GM10248 (cell line): ENCODE measurements at regions of chr16 and their contacts with region 1.

Region 1: DNA sequence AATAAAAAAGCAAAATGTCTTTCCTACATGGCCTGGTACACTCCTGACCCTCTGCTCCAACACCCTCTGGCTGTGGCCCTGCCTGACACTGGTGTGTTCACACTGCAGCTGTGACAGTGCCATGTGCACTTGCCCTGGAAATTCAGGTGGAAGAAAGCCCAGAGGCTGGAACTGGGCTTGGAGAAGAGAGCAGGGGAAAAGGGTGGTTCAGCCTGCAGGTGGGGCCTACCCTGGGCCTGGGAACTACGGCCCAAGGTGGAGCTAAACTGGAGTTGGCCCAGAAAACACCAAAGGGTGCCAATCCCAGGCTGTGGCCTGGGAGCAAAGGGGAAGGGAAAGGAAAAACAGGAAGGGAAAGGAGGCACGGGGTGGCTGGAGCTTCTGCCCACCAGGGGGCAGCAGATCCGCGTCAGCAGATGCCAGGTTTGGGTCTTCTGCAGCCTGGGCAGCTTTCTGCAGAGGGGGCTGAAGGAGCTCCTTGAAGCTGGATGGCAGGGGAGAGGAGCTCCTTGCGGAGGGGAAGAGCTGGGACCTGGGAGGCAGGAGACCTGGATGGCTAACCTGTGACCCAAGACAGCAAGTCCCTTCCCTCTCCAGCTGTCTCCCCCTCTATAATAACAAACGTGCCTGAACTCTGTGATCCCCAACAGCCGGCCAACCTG is 15.4 kb upstream of the CTCF start:
- DNase-seq: peak; percentile 80
- CTCF ChIP-seq: peak; percentile 96

Region 2: GRCh38 chr16:67499106-67499505 is 47.8 kb before region 1 on chr16:
- CTCF ChIA-PET with region 1: interaction called, 12 read pairs
- POLR2A ChIA-PET with region 1: no interaction called
- DNase-seq: no peak
- CTCF ChIP-seq: no peak

Region 3: DNA sequence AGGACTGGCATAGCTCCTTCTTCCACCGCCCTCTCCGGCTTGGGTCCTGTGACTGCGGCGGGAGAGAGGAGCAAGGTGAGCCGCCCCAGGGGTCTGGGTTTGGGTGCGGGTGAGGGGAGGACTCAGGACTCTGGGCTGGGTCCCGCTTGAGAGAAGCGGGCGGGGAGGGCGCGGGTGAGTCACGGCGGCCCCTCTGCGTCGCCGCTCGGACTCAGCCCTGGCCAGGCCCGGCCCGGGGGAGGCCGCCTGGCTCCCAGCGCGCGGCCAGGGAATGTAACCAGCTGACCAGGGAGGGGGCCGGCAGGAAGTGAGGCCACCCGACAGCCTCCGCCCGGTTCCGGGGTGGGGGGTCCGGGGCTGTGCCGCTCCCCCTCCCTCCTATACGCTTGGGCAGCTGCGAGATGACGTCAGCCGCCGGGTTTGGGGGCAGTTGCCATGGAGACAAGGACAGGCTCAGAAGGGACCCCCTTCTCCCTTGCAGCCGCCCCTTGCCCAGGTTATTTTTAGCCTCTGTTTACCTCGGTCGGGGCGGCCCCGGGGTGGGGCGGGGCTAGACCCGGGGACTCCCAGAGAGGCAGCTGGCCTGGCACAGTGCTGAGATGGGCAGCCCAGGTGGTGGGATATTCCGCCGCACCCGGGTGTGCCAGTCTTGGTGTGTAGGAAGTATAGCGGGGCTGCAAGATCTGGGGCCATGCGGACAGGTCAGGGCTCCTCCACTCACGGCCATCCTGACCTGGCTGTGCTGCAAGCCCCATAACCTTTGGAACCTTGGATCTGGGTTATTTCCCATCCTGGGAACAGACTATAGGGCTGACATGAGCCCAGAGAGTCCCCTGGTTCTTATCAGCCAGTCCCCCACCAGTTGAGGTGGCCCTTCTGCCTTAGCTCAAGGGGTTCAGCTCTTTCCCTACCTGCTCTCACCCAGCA is 16.6 kb before region 1 on chr16:
- CTCF ChIA-PET with region 1: interaction called, 65 read pairs
- POLR2A ChIA-PET with region 1: no interaction called
- DNase-seq: peak; percentile 67
- CTCF ChIP-seq: no peak

Region 4: DNA sequence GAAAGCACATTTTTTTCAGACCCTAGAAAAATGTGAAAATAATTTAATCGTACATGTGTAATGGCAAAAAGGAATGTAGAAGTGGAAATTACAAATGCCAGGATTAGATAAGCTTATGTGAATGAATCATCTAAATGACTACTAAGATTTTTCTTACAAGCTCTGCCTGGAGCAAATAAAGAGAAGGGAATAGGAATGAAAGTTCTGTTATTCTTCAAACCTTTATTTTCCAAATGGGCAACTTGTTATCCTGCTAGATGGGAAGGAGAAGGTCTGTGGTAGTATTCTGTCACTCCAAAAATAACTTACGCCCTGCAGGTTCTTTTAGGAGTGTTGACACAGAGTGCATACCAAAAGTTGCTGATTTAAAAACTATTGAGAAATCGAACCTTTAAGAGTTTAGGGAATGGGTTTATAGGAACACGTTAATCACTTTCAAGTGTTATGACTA is 25.1 kb after region 1 on chr16:
- CTCF ChIA-PET with region 1: interaction called, 13 read pairs
- POLR2A ChIA-PET with region 1: no interaction called
- DNase-seq: no peak
- CTCF ChIP-seq: no peak

Region 5: GRCh38 chr16:67632415-67633172 is 85.7 kb after region 1 on chr16:
- CTCF ChIA-PET with region 1: interaction called, 14 read pairs
- POLR2A ChIA-PET with region 1: no interaction called
- DNase-seq: no peak
- CTCF ChIP-seq: no peak

Region 6: DNA sequence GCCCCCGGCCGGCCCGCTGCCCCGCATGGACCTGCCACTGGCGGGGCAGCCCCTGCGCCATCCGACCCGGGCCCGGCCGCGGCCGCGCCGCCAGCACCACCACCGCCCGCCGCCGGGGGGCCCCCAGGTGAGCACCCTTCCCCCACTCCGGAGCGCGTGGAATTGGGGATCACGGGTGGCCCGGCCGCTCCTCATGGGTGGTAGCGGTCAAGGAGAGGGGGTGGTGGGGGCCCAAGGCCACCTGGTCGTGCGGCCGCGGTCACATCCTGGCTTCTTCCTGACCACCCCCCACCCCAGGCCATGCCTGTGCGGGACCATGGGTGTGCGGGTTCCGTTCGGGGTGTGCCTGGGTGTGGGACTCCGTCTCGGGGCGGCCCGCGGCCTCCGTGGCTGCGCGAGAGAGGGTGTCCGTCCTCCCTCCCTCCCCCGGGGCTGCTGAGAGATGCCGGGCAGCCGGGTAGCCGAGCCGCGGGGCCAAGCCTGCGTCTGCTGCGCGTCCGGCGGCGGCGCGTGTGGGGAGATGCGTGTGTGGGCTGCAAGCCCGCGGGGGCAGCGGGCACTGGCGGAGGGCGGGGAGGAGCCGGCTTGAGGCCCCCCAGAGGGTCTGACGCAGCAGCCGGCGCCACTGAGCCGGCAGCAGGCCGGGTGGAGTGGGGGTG is 106.4 kb after region 1 on chr16:
- CTCF ChIA-PET with region 1: interaction called, 157 read pairs
- POLR2A ChIA-PET with region 1: no interaction called
- DNase-seq: no peak
- CTCF ChIP-seq: no peak

Region 7: GRCh38 chr16:67667817-67668494 is 121.1 kb after region 1 on chr16:
- CTCF ChIA-PET with region 1: interaction called, 123 read pairs
- POLR2A ChIA-PET with region 1: no interaction called
- DNase-seq: peak; percentile 92
- CTCF ChIP-seq: peak; percentile 86